Posterior cingulate gyrus (tissue), 11 donors: ENCODE measurements at regions of chr14 and their contacts with region 1.

Region 1: DNA sequence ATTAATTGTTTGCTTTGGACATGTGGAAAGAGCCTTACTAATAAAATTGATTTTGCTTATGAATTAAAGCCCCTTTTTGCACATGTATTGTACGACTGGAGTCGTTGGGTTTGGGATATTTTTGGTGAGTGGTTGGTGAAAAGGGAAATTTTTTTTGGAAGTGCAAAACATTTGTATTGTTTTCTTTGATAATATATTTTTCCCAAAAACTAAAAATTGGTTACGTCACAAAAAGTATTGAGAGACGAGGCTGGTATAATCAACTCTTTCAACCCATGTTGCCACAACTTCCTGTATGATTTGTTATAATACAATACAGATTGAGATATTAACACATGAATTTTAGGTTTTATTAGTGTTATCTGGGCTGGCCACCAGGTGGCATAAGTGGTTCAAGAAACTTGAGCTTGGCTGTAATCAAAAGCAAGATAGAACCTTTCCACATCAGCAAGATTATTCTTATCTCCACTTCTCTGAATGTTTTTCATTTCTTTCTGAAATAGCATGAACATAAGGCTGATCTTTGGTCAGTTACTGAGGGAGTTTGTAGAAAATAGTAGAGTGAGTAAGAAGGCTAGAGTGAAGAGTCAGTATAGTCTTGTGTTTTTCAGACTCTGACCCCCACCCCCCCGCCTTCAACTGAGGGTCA is 8.7 kb downstream of the NGDN start:
- DNase-seq: peak in 7 of 10 donors; percentile 32 to 83 (median 64)

Region 2: GRCh38 chr14:23562268-23563203 is 84.3 kb after region 1 on chr14:
- intact Hi-C with region 1: loop called (anchors 1 kb)
- DNase-seq: peak in 8 of 10 donors; percentile 58 to 92 (median 71)